CD8-positive, alpha-beta T cell (primary cell): ENCODE measurements at regions of chr6 and their contacts with region 1.

Region 1: DNA sequence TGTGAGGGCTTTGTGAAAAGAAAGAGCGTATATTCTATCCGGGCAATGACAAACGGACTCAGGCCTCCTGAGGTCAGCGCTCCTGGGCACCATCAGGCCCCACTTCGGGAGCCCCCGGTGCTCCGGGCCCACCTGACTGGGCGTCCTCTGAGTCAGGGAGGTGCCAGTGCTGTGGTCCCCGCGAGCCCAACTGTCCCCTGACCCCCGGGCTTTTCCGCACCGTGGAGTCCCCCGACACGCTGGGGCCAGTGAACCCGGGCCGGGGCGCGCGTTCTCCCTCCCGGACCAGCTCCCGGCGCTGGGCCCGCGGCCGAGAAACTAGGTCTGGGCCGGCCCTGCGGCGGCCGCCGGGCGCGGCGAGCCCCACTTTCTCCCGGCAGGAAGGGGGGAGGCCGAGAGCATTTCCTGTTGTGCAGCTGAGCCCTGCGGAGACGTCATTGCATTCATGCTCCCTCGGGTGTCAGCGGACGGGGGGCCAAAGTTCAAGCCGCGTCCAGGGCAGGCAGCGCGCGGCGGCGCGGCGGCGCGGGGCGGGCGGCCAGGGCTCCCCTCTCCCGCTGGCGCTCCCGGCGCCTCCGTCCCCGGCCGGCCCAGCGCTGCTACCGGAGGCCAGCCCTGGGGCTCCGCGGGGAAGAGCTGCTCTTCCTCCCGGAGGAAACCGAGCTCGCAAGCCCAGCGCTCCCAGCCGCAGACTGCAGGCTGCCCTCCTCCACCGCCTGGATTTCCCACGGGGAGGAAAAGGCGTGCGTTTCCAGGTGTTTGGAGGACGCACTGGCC is 18.3 kb downstream of the HIVEP2 start:
- DNase-seq: peak; percentile 68 to 93 (median 81)
- ATAC-seq: peak; percentile 81
- H3K4me3 ChIP-seq: peak overlapping the region; percentile 76 to 86
- H3K4me3 Mint-ChIP-seq: peak overlapping the region; percentile 91
- H3K27ac ChIP-seq: peak overlapping the region; percentile 99
- H3K27ac Mint-ChIP-seq: peak overlapping the region; percentile 98
- H3K4me1 ChIP-seq: peaks cover 47% of the 10 kb centered on the region
- H3K4me1 Mint-ChIP-seq: peaks cover 63% of the 10 kb centered on the region
- H3K27me3 ChIP-seq: no peaks in the 10 kb centered on the region
- H3K27me3 Mint-ChIP-seq: no peaks in the 10 kb centered on the region
- CTCF ChIP-seq: no peak

Region 2: DNA sequence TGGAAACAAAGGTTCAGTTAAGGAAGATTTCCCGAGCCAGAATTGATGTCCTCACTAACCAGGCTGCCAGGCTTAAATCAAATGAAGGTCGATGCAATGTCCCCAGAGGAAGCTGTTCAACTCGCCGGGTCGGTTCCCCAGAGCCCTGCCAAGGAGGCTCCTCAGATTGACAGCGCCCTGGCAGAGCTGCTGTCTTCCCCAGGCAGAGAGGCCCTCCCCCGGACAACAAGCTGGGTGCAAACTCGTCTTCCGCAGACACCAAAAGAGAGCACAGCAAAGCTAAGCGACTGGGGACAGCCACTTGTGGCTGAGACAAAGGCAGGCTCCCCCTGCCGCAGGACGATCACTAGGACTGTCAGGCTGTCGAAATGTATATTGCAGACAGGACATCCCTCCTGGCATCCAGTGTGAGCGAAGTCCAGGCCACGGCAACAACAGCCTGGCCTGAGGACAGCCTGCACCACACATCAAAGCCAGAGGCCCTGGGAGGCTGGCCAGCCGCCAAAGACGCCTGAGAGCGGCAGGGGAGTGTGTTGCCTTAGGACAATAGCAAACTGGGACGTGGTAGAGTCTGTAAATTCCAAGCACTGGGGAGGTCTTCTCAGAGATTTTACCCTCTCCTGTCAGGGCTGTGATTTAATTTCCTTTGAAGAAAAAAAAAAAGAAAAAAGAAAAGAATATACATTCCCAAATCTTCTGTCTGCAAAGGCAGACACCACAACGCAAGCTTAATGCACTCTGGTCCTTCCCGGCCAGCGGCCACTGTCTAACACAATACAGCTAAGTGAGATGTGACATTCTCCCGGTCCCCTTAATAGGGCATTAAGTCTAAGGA is 80.8 kb before region 1 on chr6:
- CTCF ChIA-PET with region 1: interaction called, 3 read pairs
- POLR2A ChIA-PET with region 1: interaction called, 16 read pairs
- intact Hi-C with region 1: no loop called
- DNase-seq: peak in 8 of 9 experiments; percentile 42 to 84 (median 72)
- ATAC-seq: peak; percentile 43
- H3K4me3 ChIP-seq: peak overlapping the region; percentile 43 to 48
- H3K4me3 Mint-ChIP-seq: peak overlapping the region; percentile 87
- H3K27ac ChIP-seq: peak overlapping the region; percentile 66 to 82
- H3K27ac Mint-ChIP-seq: peak overlapping the region; percentile 97
- H3K4me1 ChIP-seq: peaks cover 80% of the 10 kb centered on the region
- H3K4me1 Mint-ChIP-seq: peaks cover 92% of the 10 kb centered on the region
- H3K27me3 ChIP-seq: no peaks in the 10 kb centered on the region
- H3K27me3 Mint-ChIP-seq: no peaks in the 10 kb centered on the region
- CTCF ChIP-seq: no peak

Region 3: GRCh38 chr6:142902636-142903053 is 24.0 kb before region 1 on chr6:
- CTCF ChIA-PET with region 1: no interaction called
- POLR2A ChIA-PET with region 1: interaction called, 21 read pairs
- intact Hi-C with region 1: loop called in 1 of 2 experiments (anchors 1 kb)
- DNase-seq: peak; percentile 53 to 95 (median 81)
- ATAC-seq: peak; percentile 58
- H3K4me3 ChIP-seq: peak overlapping the region; percentile 1 to 33
- H3K4me3 Mint-ChIP-seq: peak overlapping the region; percentile 70
- H3K27ac ChIP-seq: peak overlapping the region; percentile 82 to 87
- H3K27ac Mint-ChIP-seq: peak overlapping the region; percentile 98
- H3K4me1 ChIP-seq: peaks cover 91% of the 10 kb centered on the region
- H3K4me1 Mint-ChIP-seq: peaks cover 63% of the 10 kb centered on the region
- H3K27me3 ChIP-seq: no peaks in the 10 kb centered on the region
- H3K27me3 Mint-ChIP-seq: no peaks in the 10 kb centered on the region
- CTCF ChIP-seq: no peak

Region 4: DNA sequence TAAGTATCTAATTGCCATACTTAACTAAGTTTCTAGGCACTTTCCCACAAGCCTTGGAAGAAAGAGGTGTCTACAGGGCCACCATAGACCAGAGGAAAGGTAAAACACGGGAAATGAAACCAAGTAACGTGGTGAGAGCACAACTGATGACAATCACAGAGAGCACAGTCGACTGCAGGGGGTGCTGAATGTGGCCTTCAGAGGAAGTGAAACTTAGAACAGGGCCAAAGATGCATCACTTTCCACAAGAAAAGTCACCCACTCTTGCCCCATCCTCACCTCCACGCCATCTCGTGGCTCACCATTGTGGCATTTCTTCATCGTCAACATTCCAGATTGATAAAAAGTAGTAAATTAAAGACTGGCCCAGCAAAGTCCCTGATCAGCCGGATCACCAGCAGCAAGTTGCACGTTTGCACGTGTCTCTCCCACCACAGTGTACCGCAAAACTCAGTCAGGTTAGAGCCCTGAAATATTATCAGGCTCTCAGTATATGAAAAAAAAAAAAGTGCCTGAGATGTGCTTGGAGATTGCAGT is 13.1 kb before region 1 on chr6:
- CTCF ChIA-PET with region 1: interaction called, 4 read pairs
- POLR2A ChIA-PET with region 1: interaction called, 22 read pairs
- intact Hi-C with region 1: loop called in 1 of 2 experiments (anchors 1 kb)
- DNase-seq: peak; percentile 39 to 92 (median 73)
- ATAC-seq: peak; percentile 90
- H3K4me3 ChIP-seq: peak overlapping the region; percentile 41 to 43
- H3K4me3 Mint-ChIP-seq: peak overlapping the region; percentile 82
- H3K27ac ChIP-seq: peak overlapping the region; percentile 78 to 95
- H3K27ac Mint-ChIP-seq: peak overlapping the region; percentile 99
- H3K4me1 ChIP-seq: peaks cover 74% of the 10 kb centered on the region
- H3K4me1 Mint-ChIP-seq: peaks cover 82% of the 10 kb centered on the region
- H3K27me3 ChIP-seq: no peaks in the 10 kb centered on the region
- H3K27me3 Mint-ChIP-seq: no peaks in the 10 kb centered on the region
- CTCF ChIP-seq: peak; percentile 50

Region 5: DNA sequence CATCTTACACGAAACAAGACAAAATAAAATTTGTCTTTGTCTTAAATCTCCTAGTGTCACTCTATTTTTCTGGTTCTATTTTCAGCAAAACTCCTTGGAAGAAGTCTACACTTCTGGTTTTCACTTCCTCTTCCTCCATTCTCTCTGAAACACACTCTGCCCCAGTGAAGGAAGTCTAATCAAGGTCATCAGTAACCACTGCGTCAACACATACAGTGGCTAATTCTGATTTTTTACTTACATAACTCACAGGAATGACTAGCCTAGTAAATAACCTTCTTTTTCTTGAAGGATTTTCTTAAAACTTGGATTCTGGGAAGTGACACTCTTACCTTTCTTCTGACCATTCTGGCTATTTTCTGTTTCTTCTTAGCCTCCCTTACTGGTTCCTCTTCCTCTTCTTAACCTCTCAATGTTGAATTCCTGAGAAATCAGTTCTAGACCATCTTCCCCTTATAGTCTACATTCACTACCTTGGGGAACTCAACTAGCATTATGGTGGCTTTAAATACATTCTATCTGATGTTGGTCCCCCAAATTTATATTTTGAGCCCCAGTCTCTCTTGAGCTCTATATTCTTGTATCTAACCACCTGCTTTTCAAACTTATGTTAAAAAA is 171.5 kb after region 1 on chr6:
- CTCF ChIA-PET with region 1: no interaction called
- POLR2A ChIA-PET with region 1: no interaction called
- intact Hi-C with region 1: no loop called
- DNase-seq: peak in 1 of 9 experiments; percentile 13
- ATAC-seq: peak; percentile 33
- H3K4me3 ChIP-seq: no peak overlapping the region
- H3K4me3 Mint-ChIP-seq: no peak overlapping the region
- H3K27ac ChIP-seq: no peak overlapping the region
- H3K27ac Mint-ChIP-seq: no peak overlapping the region
- H3K4me1 ChIP-seq: peaks cover 15% of the 10 kb centered on the region
- H3K4me1 Mint-ChIP-seq: peaks cover 4% of the 10 kb centered on the region
- H3K27me3 ChIP-seq: no peaks in the 10 kb centered on the region
- H3K27me3 Mint-ChIP-seq: no peaks in the 10 kb centered on the region
- CTCF ChIP-seq: no peak